CD8-positive, alpha-beta T cell (primary cell): ENCODE measurements at regions of chr15 and their contacts with region 1.

Region 1: DNA sequence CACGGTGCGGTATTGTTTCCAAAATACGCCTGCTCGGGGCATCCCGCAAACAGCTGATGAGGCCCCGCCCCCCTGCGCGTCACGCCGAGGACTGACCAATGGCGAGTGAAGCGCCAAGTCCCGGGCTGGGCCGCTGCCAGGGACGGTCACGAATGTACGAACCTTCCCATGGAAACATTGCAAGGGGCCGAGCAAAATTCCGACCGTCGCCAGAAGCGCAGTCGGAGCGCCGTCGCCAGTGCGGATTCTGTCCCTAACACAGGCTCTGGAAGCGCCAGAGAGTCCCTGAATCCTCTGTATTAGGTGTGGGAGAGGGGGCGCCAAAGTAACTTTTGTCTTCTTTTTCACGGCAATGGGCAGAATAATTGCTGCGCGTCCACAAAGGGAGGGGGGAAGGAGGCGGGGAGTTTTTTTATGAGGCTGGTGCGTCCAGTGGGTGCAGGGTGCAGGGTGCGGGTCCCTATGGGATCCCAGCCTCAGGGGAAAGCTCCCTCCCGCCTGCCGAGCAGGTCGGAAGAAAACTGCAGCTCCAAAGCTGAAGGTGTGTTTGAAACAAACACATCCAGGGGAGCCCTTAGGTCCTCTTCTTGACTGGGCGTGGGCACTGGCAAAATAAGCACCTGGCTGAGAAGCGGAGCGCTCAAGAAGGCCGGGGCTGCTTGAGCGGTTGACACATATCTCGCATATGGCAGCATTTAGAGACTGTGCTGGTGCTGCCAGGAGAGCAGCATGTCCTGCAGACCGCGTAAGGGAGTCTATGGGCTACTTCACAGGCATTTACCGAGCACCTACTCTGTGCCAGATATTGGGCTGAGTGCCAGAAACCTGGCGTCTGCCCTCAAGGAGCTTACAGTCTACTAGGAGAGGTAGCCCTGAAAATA is at the start of gene BMF:
- DNase-seq: peak; percentile 89 to 98 (median 96)
- ATAC-seq: peak; percentile 87
- H3K4me3 ChIP-seq: peak within 1 kb of the TSS; percentile 72 to 90
- H3K4me3 Mint-ChIP-seq: peak within 1 kb of the TSS; percentile 92
- H3K27ac ChIP-seq: peak within 1 kb of the TSS; percentile 18 to 26
- H3K27ac Mint-ChIP-seq: peak within 1 kb of the TSS; percentile 60
- H3K4me1 ChIP-seq: peaks cover 30% of the 10 kb centered on the region
- H3K4me1 Mint-ChIP-seq: peaks cover 34% of the 10 kb centered on the region
- H3K27me3 ChIP-seq: no peaks in the 10 kb centered on the region
- H3K27me3 Mint-ChIP-seq: peaks cover 8% of the 10 kb centered on the region
- CTCF ChIP-seq: no peak
- total RNA-seq, gene BMF: 9.6 to 11.2 TPM

Region 2: GRCh38 chr15:39782441-39783138 is 326.5 kb before region 1 on chr15 and contains the start of gene FSIP1:
- CTCF ChIA-PET with region 1: no interaction called
- POLR2A ChIA-PET with region 1: no interaction called
- intact Hi-C with region 1: loop called (anchors 2 to 5 kb)
- DNase-seq: peak; percentile 91 to 97 (median 94)
- ATAC-seq: peak; percentile 98
- H3K4me3 ChIP-seq: peak within 1 kb of the TSS; percentile 71 to 95
- H3K4me3 Mint-ChIP-seq: peak within 1 kb of the TSS; percentile 85
- H3K27ac ChIP-seq: peak within 1 kb of the TSS; percentile 68 to 82
- H3K27ac Mint-ChIP-seq: peak within 1 kb of the TSS; percentile 87
- H3K4me1 ChIP-seq: peaks cover 20% of the 10 kb centered on the region
- H3K4me1 Mint-ChIP-seq: peaks cover 50% of the 10 kb centered on the region
- H3K27me3 ChIP-seq: no peaks in the 10 kb centered on the region
- H3K27me3 Mint-ChIP-seq: no peaks in the 10 kb centered on the region
- CTCF ChIP-seq: no peak
- total RNA-seq, gene FSIP1: 0.22 to 0.64 TPM

Region 3: DNA sequence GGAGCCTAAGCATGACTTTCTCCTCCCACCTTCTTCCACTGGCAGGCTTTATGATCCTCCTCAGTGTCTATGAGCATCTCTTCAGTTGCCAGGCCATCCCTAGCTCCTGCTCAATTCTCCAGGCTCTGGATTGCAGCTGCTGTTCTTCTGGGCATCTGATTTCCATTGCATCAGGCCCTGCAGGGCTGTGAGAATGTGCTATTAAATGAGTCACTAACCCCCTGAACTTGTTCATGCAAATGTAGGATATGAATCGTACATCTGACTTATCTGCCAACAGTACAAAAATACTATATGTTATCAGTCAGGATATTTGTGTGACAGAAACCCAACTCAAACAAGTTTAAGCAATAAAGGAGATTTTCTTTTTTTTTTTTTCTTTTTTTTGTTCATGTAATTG is 200.9 kb before region 1 on chr15:
- CTCF ChIA-PET with region 1: no interaction called
- POLR2A ChIA-PET with region 1: no interaction called
- intact Hi-C with region 1: no loop called
- DNase-seq: no peak
- ATAC-seq: no peak
- H3K4me3 ChIP-seq: no peak overlapping the region
- H3K4me3 Mint-ChIP-seq: no peak overlapping the region
- H3K27ac ChIP-seq: no peak overlapping the region
- H3K27ac Mint-ChIP-seq: no peak overlapping the region
- H3K4me1 ChIP-seq: no peaks in the 10 kb centered on the region
- H3K4me1 Mint-ChIP-seq: no peaks in the 10 kb centered on the region
- H3K27me3 ChIP-seq: no peaks in the 10 kb centered on the region
- H3K27me3 Mint-ChIP-seq: peaks cover 7% of the 10 kb centered on the region
- CTCF ChIP-seq: no peak

Region 4: DNA sequence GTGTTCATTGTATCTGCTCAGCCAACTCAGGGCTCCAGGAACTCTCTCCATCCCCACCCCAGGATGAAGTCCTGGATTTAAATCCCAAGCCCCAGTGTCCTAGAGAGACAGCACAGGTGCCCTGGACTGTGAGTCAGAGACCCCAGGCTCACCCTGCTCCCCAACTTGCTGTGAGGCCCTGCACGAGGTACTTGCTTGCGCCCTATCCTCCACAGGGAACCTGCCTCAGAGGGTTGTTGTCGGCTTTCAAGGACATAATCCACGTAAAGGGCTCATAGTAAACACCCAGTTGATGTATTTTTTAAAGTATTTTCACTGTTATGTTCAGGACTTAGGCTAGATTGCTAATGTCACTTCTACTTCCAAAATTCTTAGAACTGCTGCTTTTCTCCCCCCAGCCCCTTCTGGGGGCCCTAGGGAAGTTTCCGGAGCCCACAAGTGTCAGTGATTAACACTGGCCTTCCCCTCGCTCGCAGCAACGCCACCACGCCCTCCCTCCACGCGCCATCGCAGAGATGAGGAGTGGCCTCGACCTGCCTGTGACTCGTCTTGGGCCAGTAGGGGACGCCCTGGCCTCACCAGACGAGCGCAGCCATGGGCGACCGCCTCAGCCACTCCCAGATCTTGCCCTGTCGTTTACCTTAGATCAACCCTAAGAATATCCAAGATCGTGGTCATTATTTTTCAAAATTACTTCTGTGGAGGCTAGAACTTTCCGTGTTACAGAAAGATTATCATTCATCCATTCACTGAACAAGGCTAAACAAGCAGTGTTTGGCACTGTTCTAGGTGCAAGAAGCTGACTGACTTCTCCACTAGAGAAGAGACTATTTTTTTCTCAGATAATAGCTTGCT is 64.2 kb before region 1 on chr15:
- CTCF ChIA-PET with region 1: interaction called, 192 read pairs
- POLR2A ChIA-PET with region 1: interaction called, 13 read pairs
- intact Hi-C with region 1: loop called (anchors 1 to 2 kb)
- DNase-seq: peak; percentile 58 to 91 (median 80)
- ATAC-seq: peak; percentile 89
- H3K4me3 ChIP-seq: no peak overlapping the region
- H3K4me3 Mint-ChIP-seq: peak overlapping the region; percentile 12
- H3K27ac ChIP-seq: no peak overlapping the region
- H3K27ac Mint-ChIP-seq: no peak overlapping the region
- H3K4me1 ChIP-seq: peaks cover 46% of the 10 kb centered on the region
- H3K4me1 Mint-ChIP-seq: peaks cover 55% of the 10 kb centered on the region
- H3K27me3 ChIP-seq: no peaks in the 10 kb centered on the region
- H3K27me3 Mint-ChIP-seq: no peaks in the 10 kb centered on the region
- CTCF ChIP-seq: peak; percentile 90

Region 5: DNA sequence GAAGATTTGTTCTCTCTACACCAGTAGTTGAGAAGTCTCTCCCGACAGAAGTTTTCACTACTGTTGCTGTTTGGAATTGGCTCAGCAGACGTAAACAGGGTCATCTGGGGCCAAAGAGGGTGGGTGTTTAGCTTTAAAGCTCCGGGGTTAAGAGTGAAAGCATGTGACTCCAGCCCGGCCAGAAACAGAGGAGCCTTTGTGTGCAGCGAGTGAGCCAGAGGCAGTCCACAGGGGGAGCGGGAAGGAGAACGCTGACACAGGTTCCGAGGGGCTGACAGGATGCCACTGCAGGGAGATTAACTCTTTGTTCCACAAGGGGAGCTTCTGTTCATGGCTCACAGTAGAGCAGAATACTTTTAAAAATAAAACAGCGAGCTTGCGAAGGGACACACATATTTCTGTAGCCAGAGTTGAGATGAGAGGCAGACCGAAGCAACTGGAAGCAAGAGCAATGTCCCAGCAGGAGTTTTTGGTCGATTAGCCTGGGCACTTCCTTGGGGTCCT is 27.4 kb before region 1 on chr15:
- CTCF ChIA-PET with region 1: interaction called, 17 read pairs
- POLR2A ChIA-PET with region 1: no interaction called
- intact Hi-C with region 1: no loop called
- DNase-seq: no peak
- ATAC-seq: peak; percentile 42
- H3K4me3 ChIP-seq: no peak overlapping the region
- H3K4me3 Mint-ChIP-seq: peak overlapping the region; percentile 69
- H3K27ac ChIP-seq: no peak overlapping the region
- H3K27ac Mint-ChIP-seq: no peak overlapping the region
- H3K4me1 ChIP-seq: peaks cover 16% of the 10 kb centered on the region
- H3K4me1 Mint-ChIP-seq: peaks cover 25% of the 10 kb centered on the region
- H3K27me3 ChIP-seq: peaks cover 0 to 2% of the 10 kb centered on the region in 2 experiments
- H3K27me3 Mint-ChIP-seq: peaks cover 30% of the 10 kb centered on the region
- CTCF ChIP-seq: no peak

Region 6: DNA sequence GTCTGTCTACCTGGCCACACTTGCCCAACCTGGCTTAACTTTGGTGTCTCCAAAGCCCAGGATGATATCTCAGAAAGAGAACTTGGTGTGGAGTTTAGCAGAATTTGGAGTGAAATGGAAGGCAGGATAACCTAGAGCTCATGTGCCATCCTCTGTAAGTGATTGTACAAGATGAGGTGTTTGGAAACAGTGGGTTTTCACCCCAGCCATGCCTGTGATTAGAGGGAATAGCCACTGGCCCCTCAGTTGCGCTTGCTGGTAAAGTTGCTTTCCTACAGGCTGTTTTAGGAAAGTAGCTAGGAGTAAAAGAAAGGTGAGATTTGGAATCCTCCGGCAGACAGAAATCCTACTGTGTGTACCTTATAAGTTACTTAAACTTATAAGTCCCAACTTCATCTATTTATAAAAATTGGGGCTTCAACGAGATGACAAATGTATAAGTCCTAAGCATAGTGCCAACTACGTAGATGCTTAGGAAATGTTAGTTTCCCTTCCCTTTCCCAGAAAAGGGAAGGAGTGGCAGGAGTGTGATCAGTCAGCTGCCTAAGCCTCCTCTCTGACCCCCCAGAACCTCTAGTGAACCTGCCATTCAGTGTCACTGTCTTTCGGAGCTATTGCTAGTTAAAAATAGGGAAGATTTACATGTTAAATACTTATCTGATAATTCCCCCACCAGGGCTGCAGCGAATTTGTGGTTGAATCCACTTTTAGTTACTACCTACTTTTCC is 13.0 kb after region 1 on chr15:
- CTCF ChIA-PET with region 1: interaction called, 22 read pairs
- POLR2A ChIA-PET with region 1: no interaction called
- intact Hi-C with region 1: no loop called
- DNase-seq: no peak
- ATAC-seq: no peak
- H3K4me3 ChIP-seq: no peak overlapping the region
- H3K4me3 Mint-ChIP-seq: no peak overlapping the region
- H3K27ac ChIP-seq: no peak overlapping the region
- H3K27ac Mint-ChIP-seq: no peak overlapping the region
- H3K4me1 ChIP-seq: no peaks in the 10 kb centered on the region
- H3K4me1 Mint-ChIP-seq: no peaks in the 10 kb centered on the region
- H3K27me3 ChIP-seq: no peaks in the 10 kb centered on the region
- H3K27me3 Mint-ChIP-seq: no peaks in the 10 kb centered on the region
- CTCF ChIP-seq: no peak

Region 7: DNA sequence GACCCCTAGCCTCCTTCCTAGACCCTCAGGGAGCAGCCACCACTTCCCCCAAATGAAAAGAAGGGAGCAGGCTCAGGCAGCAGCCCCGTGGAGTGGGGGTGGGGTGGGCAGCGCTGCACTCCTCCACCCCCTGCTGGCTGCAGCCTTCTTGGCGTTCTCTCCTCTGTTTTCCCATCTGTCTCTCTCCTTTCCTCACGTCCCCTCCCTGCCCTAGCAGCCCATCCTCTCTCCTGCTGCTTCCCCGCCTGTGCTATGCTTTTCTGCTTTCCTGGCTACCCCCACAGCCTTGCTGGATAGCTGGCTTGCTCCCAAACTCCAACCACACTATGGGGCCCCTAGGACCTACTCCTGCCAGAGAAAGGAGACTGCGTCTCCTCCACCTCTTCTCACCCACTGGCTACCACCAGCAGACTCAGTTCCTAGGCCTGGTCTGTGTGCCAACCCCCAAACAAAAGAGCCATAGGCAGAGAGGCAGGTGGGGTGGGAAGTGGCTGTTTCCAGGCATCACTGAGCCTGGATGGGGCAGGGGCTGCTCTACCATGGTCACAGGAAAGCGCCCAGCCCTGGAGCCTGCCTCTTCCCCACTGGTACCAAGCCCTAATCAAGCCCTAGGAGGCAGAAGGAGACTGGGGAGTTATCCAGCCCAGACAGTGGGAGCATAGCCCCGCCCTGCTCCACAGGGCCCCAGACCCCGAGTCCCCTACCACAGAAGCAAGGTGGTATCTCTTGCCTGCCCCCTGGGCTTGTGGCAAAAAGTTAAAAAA is 245.5 kb after region 1 on chr15:
- CTCF ChIA-PET with region 1: no interaction called
- POLR2A ChIA-PET with region 1: no interaction called
- intact Hi-C with region 1: no loop called
- DNase-seq: no peak
- ATAC-seq: no peak
- H3K4me3 ChIP-seq: no peak overlapping the region
- H3K4me3 Mint-ChIP-seq: no peak overlapping the region
- H3K27ac ChIP-seq: no peak overlapping the region
- H3K27ac Mint-ChIP-seq: no peak overlapping the region
- H3K4me1 ChIP-seq: peaks cover 13% of the 10 kb centered on the region
- H3K4me1 Mint-ChIP-seq: peaks cover 9% of the 10 kb centered on the region
- H3K27me3 ChIP-seq: no peaks in the 10 kb centered on the region
- H3K27me3 Mint-ChIP-seq: peaks cover 2% of the 10 kb centered on the region
- CTCF ChIP-seq: no peak

Region 8: GRCh38 chr15:40382580-40383456 is 273.7 kb after region 1 on chr15 and contains the start of gene KNSTRN:
- CTCF ChIA-PET with region 1: no interaction called
- POLR2A ChIA-PET with region 1: no interaction called
- intact Hi-C with region 1: loop called in 1 of 2 experiments (anchors 2 kb)
- DNase-seq: peak; percentile 84 to 95 (median 93)
- ATAC-seq: peak; percentile 99
- H3K4me3 ChIP-seq: peak within 1 kb of the TSS; percentile 73 to 93
- H3K4me3 Mint-ChIP-seq: peak within 1 kb of the TSS; percentile 99
- H3K27ac ChIP-seq: peak within 1 kb of the TSS in 1 of 2 experiments; percentile 54
- H3K27ac Mint-ChIP-seq: peak within 1 kb of the TSS; percentile 81
- H3K4me1 ChIP-seq: peaks cover 13% of the 10 kb centered on the region
- H3K4me1 Mint-ChIP-seq: peaks cover 16% of the 10 kb centered on the region
- H3K27me3 ChIP-seq: no peaks in the 10 kb centered on the region
- H3K27me3 Mint-ChIP-seq: no peaks in the 10 kb centered on the region
- CTCF ChIP-seq: no peak
- total RNA-seq, gene KNSTRN: 3.8 to 5.4 TPM

Region 9: DNA sequence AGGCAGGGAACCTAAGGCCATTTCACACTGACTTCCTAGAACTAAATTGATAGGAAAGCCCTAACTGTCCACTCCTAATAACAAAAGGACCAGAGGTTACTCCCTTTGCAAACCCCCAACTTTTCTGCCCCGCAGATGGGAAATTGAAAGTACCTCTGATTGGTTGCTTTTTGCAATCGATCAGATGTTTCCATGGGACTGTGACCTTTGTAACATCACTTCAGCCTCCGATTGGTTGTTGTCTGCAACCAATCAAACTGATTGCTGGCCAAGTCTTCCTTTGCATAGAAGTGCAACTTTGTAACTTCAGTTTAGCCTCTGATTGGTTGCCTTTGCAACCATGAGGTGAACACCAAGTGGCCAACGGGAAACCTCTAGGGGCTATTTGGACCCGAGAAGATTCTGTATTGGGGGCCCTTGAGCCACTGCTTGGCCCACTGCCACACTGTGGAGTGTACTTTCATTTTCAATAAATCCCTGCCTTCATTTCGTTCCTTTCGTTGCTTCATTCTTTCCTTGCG is 473.7 kb after region 1 on chr15:
- CTCF ChIA-PET with region 1: no interaction called
- POLR2A ChIA-PET with region 1: no interaction called
- intact Hi-C with region 1: no loop called
- DNase-seq: peak in 1 of 9 experiments; percentile 41
- ATAC-seq: no peak
- H3K4me3 ChIP-seq: no peak overlapping the region
- H3K4me3 Mint-ChIP-seq: no peak overlapping the region
- H3K27ac ChIP-seq: no peak overlapping the region
- H3K27ac Mint-ChIP-seq: no peak overlapping the region
- H3K4me1 ChIP-seq: no peaks in the 10 kb centered on the region
- H3K4me1 Mint-ChIP-seq: no peaks in the 10 kb centered on the region
- H3K27me3 ChIP-seq: no peaks in the 10 kb centered on the region
- H3K27me3 Mint-ChIP-seq: peaks cover 3% of the 10 kb centered on the region
- CTCF ChIP-seq: no peak